ENCODE measurements at regions of chr7 and their contacts with region 1.

Region 1: DNA sequence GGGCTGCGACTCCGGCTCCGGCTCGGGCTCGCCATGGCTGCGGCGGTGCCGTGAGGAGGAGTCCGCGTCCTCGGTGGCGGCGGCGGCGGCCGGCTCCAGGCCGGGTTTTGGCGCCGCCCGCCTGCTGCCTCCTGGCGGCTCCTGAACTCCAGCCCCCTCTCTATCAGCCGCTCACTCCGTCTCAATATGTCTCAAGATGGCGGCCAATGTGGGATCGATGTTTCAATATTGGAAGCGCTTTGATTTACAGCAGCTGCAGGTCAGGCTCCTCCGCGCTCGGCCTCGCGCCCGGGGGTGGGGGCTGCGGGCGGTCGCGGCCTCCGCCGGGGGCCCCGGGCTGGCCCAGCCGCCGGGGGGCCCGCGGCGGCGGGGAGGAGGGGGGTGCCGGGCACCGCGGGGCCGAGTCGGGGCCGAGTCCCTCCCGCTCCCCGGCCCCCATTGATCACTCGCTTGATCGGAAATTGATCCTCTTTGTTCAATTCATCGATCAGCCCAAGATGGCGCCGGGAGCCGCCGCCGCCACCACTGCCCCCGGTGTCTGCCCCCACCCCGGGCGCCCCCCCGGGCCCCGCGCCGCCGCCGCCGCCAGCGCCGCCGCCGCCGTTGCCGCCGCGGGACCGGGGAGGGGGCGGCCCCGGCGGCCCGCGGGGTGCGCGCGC is 1.5 kb upstream of the CUX1 start:
- DNase-seq: no peak
- H3K4me3 ChIP-seq: peak overlapping the region; percentile 92 to 94 (median 92)
- H3K27ac ChIP-seq: peak overlapping the region; percentile 81 to 87 (median 82)
- H3K4me1 ChIP-seq: peaks cover 24 to 53% (median 42%) of the 10 kb centered on the region in 4 donors
- H3K27me3 ChIP-seq: no peaks in the 10 kb centered on the region
- CTCF ChIP-seq: peak in 2 of 3 experiments; percentile 2 to 27
- EP300 ChIP-seq: no peak
- POLR2A ChIP-seq: no peak

Region 2: GRCh38 chr7:101378751-101379184 is 437.2 kb before region 1 on chr7:
- intact Hi-C with region 1: no loop called
- DNase-seq: no peak
- H3K4me3 ChIP-seq: no peak overlapping the region
- H3K27ac ChIP-seq: no peak overlapping the region
- H3K4me1 ChIP-seq: peaks cover 0 to 7% (median 6%) of the 10 kb centered on the region in 4 donors
- H3K27me3 ChIP-seq: peaks cover 0 to 8% (median 0%) of the 10 kb centered on the region in 4 donors
- CTCF ChIP-seq: no peak
- EP300 ChIP-seq: no peak
- POLR2A ChIP-seq: no peak

Region 3: DNA sequence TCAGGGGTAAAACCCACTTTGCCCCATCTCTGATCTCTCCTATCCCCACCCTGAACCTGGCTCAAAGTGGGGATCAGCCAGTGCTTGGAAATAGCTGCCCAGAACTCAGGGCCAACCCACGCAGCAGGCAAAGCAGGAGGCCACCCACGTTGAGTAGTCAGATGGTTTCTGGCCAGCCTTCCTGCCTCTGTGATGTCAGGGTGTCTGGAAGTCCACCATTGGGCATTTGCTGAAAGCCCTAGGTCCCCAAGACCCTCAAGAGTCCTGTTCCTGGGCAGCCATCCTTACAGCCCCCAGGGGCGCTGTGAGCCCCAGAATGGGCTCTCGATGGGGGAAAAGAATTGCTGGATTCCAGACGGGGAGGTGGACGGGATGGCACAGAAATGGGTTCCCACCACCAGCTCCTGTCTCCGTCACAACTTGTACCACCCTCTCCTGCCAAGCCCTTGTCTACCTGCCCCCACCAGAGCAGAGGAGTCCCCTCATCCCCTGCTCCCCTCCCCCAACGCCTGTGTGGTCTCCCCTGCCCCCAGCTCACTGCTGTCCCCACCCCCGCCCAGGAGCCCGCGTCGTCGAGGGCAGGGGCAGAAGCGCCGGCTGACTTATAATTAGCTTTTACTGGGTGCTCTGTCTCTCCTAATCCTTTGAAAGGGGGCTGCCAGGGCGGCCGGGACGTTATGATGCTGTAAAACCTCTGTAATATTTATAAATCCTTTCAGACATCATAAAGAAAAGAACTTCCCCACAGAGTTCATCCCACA is 190.8 kb before region 1 on chr7:
- intact Hi-C with region 1: no loop called
- DNase-seq: no peak
- H3K4me3 ChIP-seq: no peak overlapping the region
- H3K27ac ChIP-seq: no peak overlapping the region
- H3K4me1 ChIP-seq: peaks cover 0 to 7% (median 0%) of the 10 kb centered on the region in 4 donors
- H3K27me3 ChIP-seq: peaks cover 0 to 72% (median 7%) of the 10 kb centered on the region in 4 donors
- CTCF ChIP-seq: no peak
- EP300 ChIP-seq: no peak
- POLR2A ChIP-seq: no peak

Region 4: DNA sequence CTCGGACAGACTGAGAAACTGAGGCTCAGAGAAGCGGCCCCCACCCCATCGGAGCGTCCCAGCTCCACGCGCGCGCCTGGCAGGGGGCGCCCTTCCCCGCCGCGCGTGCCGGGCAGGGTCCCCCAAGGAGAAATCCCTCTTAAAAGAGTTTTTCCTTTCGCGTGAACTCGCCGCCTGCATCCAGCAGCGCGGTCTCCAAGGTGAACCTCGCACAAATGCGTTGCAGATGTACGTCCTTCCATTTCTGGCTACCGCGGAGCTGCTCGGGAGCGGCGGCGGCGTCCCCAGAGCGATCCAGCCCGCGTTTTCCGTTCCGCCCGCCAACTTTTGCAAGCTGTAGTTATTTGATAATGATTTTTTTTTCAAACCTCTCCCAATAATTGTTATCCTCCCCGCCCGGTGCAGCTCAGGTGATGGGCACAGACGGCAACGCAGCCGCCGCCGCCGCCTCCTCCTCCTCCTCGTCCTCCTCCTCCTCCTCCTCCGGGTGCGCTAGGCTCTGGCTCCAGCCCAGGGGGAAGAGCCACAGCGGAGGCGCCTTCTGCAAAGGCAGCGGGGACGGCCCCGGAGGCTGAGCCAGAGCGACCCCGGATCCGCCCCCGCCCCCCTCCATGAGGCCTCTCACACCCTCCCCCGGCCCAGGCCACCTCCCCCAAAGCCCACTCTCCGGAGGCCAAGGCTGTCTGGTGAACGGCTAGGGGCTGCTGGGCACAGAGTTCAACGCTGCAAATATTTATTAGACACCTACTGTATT is 72.5 kb before region 1 on chr7:
- intact Hi-C with region 1: loop called (anchors 5 kb)
- DNase-seq: no peak
- H3K4me3 ChIP-seq: peak overlapping the region; percentile 52 to 60 (median 54)
- H3K27ac ChIP-seq: no peak overlapping the region
- H3K4me1 ChIP-seq: peaks cover 11 to 22% (median 14%) of the 10 kb centered on the region in 4 donors
- H3K27me3 ChIP-seq: peaks cover 0 to 25% (median 0%) of the 10 kb centered on the region in 4 donors
- CTCF ChIP-seq: peak; percentile 36 to 62 (median 54)
- EP300 ChIP-seq: no peak
- POLR2A ChIP-seq: no peak

Region 5: GRCh38 chr7:101882595-101883564 is 66.9 kb after region 1 on chr7:
- intact Hi-C with region 1: loop called (anchors 5 kb)
- DNase-seq: peak; percentile 95
- H3K4me3 ChIP-seq: peak overlapping the region in 2 of 4 donors; percentile 4 to 15
- H3K27ac ChIP-seq: peak overlapping the region; percentile 83 to 91 (median 84)
- H3K4me1 ChIP-seq: peaks cover 70 to 79% (median 75%) of the 10 kb centered on the region in 4 donors
- H3K27me3 ChIP-seq: no peaks in the 10 kb centered on the region
- CTCF ChIP-seq: peak in 2 of 3 experiments; percentile 3 to 20
- EP300 ChIP-seq: peak; percentile 17
- POLR2A ChIP-seq: no peak

Region 6: GRCh38 chr7:102125127-102125561 is 309.2 kb after region 1 on chr7:
- intact Hi-C with region 1: loop called (anchors 5 kb)
- DNase-seq: peak; percentile 93
- H3K4me3 ChIP-seq: no peak overlapping the region
- H3K27ac ChIP-seq: peak overlapping the region; percentile 4 to 63 (median 48)
- H3K4me1 ChIP-seq: peaks cover 4 to 27% (median 16%) of the 10 kb centered on the region in 4 donors
- H3K27me3 ChIP-seq: no peaks in the 10 kb centered on the region
- CTCF ChIP-seq: peak; percentile 16 to 36 (median 25)
- EP300 ChIP-seq: no peak
- POLR2A ChIP-seq: no peak